Activated CD4-positive, alpha-beta T cell treated with anti-CD3 and anti-CD28 coated beads for 36 hours (primary cell): ENCODE measurements at regions of chr3 and their contacts with region 1.

Region 1: DNA sequence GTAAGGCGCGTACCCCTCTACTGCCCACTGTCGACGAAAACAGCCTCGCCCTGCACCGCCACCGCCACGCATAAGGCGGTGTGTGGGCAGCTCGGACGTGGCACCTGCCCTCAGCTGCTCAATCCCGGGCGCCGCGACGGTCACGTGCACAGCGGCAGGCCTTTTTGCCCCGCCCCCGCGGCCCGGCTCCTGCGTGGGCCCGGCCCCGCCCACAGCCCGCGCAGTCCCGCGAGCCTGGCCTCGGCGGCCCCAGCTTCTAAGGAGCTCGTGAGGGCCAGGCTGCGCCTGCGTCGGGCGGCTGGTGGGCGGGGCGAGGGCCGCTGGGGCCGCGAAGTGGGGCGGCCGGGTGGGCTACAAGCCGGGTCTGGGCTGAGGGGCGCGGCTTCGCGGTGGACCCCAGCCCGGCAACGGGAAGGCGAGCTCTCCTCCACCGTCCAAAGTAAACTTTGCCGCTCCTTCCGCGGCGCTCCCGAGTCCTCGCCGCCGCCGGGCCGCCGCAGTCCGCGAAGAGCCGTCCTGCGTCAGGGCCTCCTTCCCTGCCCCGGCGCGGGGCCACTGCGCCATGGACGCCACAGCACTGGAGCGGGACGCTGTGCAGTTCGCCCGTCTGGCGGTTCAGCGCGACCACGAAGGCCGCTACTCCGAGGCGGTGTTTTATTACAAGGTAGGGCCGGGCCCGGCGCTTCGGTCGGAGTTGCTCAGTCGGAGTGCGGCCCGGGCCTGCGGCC is at the start of gene CAPN7:
- DNase-seq: peak; percentile 94
- ATAC-seq: peak; percentile 86
- H3K4me3 Mint-ChIP-seq: peak within 1 kb of the TSS; percentile 85
- H3K27ac Mint-ChIP-seq: peak within 1 kb of the TSS; percentile 93
- H3K4me1 Mint-ChIP-seq: peaks cover 23% of the 10 kb centered on the region
- H3K27me3 Mint-ChIP-seq: no peaks in the 10 kb centered on the region
- total RNA-seq, gene CAPN7: 18.4 to 20.4 TPM

Region 2: GRCh38 chr3:14651440-14652251 is 554.5 kb before region 1 on chr3 and contains the start of gene CCDC174:
- CTCF ChIA-PET with region 1: no interaction called
- POLR2A ChIA-PET with region 1: no interaction called
- intact Hi-C with region 1: loop called in 1 of 2 experiments (anchors 1 kb)
- DNase-seq: peak; percentile 95
- ATAC-seq: peak; percentile 99
- H3K4me3 Mint-ChIP-seq: peak within 1 kb of the TSS; percentile 93
- H3K27ac Mint-ChIP-seq: peak within 1 kb of the TSS; percentile 96
- H3K4me1 Mint-ChIP-seq: peaks cover 40% of the 10 kb centered on the region
- H3K27me3 Mint-ChIP-seq: no peaks in the 10 kb centered on the region
- total RNA-seq, gene CCDC174: 16.2 to 18.2 TPM

Region 3: GRCh38 chr3:15098503-15099363 is 107.4 kb before region 1 on chr3 and contains the start of gene RBSN:
- CTCF ChIA-PET with region 1: interaction called, 7 read pairs
- POLR2A ChIA-PET with region 1: no interaction called
- intact Hi-C with region 1: loop called (anchors 1 to 2 kb)
- DNase-seq: peak; percentile 98
- ATAC-seq: peak; percentile 85
- H3K4me3 Mint-ChIP-seq: peak within 1 kb of the TSS; percentile 85
- H3K27ac Mint-ChIP-seq: peak within 1 kb of the TSS; percentile 91
- H3K4me1 Mint-ChIP-seq: peaks cover 18% of the 10 kb centered on the region
- H3K27me3 Mint-ChIP-seq: peaks cover 2% of the 10 kb centered on the region
- total RNA-seq, gene RBSN: 13.5 to 15.0 TPM

Region 4: GRCh38 chr3:15332405-15333098 is 126.5 kb after region 1 on chr3 and contains the start of gene SH3BP5:
- CTCF ChIA-PET with region 1: interaction called, 3 read pairs
- POLR2A ChIA-PET with region 1: no interaction called
- intact Hi-C with region 1: loop called in 1 of 2 experiments (anchors 1 kb)
- DNase-seq: peak; percentile 86
- ATAC-seq: peak; percentile 89
- H3K4me3 Mint-ChIP-seq: peak within 1 kb of the TSS; percentile 85
- H3K27ac Mint-ChIP-seq: peak within 1 kb of the TSS; percentile 83
- H3K4me1 Mint-ChIP-seq: peaks cover 53% of the 10 kb centered on the region
- H3K27me3 Mint-ChIP-seq: peaks cover 2% of the 10 kb centered on the region
- total RNA-seq, gene SH3BP5: 8.9 to 9.4 TPM

Region 5: DNA sequence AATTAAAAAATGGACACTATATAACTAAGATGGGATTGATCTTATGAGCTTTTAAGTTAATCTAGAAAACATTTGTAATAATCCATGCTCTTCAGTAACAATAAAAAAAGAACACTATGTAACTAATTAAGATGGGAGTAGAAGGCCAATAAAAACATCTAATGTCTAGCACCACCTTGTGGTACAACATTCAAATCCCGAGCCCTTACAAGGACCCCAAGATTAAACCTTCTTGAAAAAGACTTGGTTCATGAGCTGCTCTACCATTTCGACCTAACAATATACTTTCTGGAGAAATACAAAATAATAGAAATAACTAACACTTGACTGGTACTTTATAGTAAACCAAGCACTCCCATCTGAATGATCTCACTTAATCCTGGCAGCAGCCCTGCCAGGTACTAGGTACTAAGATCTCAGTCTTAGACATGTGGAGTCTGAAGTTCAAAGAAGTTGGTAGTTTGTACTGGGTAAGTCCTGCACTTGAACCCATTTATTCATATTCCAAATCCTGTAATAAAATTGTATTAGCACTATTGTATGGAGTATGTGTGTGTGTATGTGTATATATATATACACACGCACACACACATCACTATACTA is 199.5 kb after region 1 on chr3:
- CTCF ChIA-PET with region 1: interaction called, 54 read pairs
- POLR2A ChIA-PET with region 1: no interaction called
- intact Hi-C with region 1: loop called (anchors 1 to 2 kb)
- DNase-seq: no peak
- ATAC-seq: peak; percentile 72
- H3K4me3 Mint-ChIP-seq: no peak overlapping the region
- H3K27ac Mint-ChIP-seq: no peak overlapping the region
- H3K4me1 Mint-ChIP-seq: no peaks in the 10 kb centered on the region
- H3K27me3 Mint-ChIP-seq: no peaks in the 10 kb centered on the region

Region 6: GRCh38 chr3:15601397-15602145 is 395.5 kb after region 1 on chr3 and contains the starts of genes BTD and HACL1:
- CTCF ChIA-PET with region 1: no interaction called
- POLR2A ChIA-PET with region 1: interaction called, 4 read pairs
- intact Hi-C with region 1: loop called in 1 of 2 experiments (anchors 5 kb)
- DNase-seq: peak; percentile 99
- ATAC-seq: peak; percentile 94
- H3K4me3 Mint-ChIP-seq: peak within 1 kb of the TSS; percentile 100
- H3K27ac Mint-ChIP-seq: peak within 1 kb of the TSS; percentile 98
- H3K4me1 Mint-ChIP-seq: peaks cover 41% of the 10 kb centered on the region
- H3K27me3 Mint-ChIP-seq: no peaks in the 10 kb centered on the region
- total RNA-seq, gene BTD: 3.8 to 4.4 TPM
- total RNA-seq, gene HACL1: 22.3 to 23.2 TPM

Region 7: DNA sequence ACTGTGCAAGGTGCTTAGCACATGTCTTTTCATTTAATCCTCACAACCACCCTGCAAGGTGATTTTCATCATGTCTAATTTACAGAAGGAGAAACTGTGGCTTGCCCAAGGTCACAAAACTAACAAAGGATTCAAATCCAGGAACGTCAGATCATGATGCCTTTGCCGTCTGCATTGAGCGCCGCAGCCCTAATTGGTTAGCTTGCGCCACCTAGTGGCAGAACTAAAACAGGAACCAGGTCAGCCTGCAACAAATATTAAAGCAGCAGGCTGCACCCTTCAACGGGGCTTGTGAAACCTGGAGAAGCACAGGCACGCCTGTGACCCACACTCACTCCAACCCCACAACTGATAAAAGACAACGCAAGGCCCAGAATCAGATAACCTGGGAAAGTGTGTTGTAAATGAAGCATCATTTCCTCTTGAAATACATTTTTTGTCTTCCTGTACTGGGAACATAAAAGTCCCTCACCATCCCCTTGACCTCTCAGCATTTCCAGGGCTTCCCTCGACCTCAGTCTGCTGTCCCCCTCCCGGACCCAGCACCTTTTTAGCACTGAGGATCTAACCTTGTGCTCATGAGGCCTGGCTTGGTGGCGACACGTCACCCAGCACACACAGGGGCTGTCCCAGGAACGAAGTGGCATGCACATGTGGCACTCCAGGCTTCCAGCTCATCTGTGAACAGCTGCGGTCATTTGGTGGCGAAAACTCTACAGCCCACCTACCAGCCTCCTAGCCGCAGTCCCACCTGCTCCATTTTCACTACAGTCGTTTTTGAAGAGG is 1041.4 kb after region 1 on chr3:
- CTCF ChIA-PET with region 1: no interaction called
- POLR2A ChIA-PET with region 1: no interaction called
- intact Hi-C with region 1: loop called in 1 of 2 experiments (anchors 1 kb)
- DNase-seq: peak; percentile 88
- ATAC-seq: peak; percentile 83
- H3K4me3 Mint-ChIP-seq: no peak overlapping the region
- H3K27ac Mint-ChIP-seq: no peak overlapping the region
- H3K4me1 Mint-ChIP-seq: peaks cover 17% of the 10 kb centered on the region
- H3K27me3 Mint-ChIP-seq: no peaks in the 10 kb centered on the region